A549 (cell line): ENCODE measurements at regions of chr1 and their contacts with region 1.

Region 1: DNA sequence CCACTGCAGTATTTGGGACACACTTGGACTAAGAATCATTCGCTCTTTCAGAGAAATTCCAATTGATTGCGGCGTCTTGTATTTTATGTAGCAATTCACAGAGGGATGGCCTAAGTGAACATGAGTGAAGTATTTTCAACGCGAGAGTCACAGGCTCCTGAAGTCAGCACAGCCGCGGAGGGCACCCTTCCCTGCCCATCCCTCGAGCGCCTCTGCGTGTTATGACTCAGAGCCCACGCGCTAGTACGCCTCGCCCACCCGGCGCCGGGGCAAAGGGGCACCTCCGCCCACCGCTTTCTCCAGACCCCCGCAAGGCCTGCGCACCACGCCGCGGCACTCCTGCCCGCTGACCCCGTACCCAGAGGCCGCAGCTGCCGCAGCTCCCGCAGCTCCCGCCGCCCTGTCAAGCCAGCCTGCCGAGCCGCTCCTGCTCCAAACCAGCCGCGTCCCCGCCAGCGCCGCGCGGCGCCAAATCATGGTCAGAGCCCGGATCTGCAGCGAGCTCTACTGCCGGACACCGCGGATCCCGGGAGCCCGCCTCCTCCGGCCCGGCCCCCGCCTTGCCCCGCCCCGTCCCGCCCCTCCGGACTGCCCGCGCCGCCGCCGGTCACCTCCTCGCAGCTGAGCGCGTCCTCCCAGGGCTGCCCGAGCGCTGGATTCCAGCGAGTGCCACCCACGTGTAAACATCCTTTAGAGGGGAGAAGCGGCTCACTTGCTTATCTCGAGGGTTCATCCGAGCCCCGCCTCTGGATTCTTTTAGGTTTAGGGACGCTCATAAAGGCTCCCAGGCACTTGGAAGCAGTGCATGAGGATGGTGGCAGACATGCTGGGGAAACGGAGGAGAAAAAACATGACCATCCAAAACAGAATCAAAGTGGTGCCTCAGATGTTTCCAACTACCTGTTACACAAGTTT is at the start of gene GLRX2:
- DNase-seq: peak; percentile 88 to 89
- ATAC-seq: peak; percentile 90 to 96
- H3K4me3 ChIP-seq: peak within 1 kb of the TSS; percentile 67
- H3K27ac ChIP-seq: peak within 1 kb of the TSS; percentile 76 to 96
- H3K4me1 ChIP-seq: peaks cover 17% of the 10 kb centered on the region; the same call in 2 of the 3 replicates
- CTCF ChIP-seq: no peak
- EP300 ChIP-seq: no peak
- POLR2A ChIP-seq: peak; percentile 78
- RAD21 ChIP-seq: peak; percentile 51 to 64
- polyA plus RNA-seq, gene GLRX2: 33.5 and 64.8 TPM in 2 replicates

Region 2: DNA sequence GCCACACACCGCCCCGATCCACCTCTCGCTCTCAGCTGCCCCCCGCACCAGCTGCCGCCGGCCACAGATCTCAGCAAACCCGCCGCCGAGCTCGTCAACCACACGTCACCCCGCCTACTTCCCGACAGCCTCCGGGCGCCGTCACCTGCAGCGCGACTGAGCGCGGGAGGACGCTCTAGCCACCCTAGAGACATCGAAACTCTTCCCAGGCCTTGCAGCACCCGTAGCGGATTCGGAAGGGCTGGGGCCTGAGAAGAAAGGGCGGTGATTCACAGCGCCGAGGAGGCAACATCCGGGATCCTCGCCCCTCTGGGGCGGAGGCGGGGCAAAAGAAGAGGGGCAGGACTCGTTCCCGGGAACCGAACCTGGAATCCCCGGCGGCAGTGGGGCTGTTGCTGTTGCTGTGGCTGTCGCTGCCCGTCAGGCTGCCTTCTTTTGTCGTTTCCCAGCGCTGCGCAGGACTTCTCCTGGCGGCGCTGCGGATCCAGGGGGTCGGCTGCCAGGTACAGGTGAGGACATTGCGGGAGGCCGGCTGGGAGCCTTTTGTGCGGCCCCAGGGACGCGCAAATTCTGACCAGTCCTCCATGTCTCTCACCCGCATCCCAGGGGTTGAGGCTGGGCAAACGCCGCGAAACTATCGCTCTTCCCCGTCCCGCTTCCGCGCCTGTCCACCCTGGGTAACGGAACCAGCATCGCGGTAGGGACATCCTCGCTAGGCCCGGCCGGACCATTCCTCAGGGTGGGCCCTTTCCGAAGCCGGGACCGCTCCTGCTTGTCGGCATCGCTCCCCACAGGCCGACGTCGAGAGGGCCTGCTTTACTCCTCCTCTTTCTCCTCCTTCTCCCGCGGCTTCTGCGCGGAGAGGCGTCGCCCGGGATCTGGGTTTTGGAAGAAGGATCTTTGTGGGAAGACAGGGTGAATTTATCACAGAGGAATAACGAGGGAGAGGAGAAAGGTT is 45.6 kb before region 1 on chr1 and contains the starts of genes RO60 and UCHL5:
- CTCF ChIA-PET with region 1: interaction called, 4 read pairs
- POLR2A ChIA-PET with region 1: interaction called, 17 read pairs
- DNase-seq: peak; percentile 91 to 99
- ATAC-seq: peak; percentile 95 to 97
- H3K4me3 ChIP-seq: peak within 1 kb of the TSS; percentile 82
- H3K27ac ChIP-seq: peak within 1 kb of the TSS; percentile 94 to 96
- H3K4me1 ChIP-seq: peaks cover 22% of the 10 kb centered on the region
- CTCF ChIP-seq: no peak
- EP300 ChIP-seq: no peak
- POLR2A ChIP-seq: peak; percentile 69
- RAD21 ChIP-seq: peak in 1 of 2 experiments; percentile 15; a peak in 1 of 5 replicates
- polyA plus RNA-seq, gene RO60: 37.4 and 47.1 TPM in 2 replicates
- polyA plus RNA-seq, gene UCHL5: 37.6 and 68.3 TPM in 2 replicates

Region 3: DNA sequence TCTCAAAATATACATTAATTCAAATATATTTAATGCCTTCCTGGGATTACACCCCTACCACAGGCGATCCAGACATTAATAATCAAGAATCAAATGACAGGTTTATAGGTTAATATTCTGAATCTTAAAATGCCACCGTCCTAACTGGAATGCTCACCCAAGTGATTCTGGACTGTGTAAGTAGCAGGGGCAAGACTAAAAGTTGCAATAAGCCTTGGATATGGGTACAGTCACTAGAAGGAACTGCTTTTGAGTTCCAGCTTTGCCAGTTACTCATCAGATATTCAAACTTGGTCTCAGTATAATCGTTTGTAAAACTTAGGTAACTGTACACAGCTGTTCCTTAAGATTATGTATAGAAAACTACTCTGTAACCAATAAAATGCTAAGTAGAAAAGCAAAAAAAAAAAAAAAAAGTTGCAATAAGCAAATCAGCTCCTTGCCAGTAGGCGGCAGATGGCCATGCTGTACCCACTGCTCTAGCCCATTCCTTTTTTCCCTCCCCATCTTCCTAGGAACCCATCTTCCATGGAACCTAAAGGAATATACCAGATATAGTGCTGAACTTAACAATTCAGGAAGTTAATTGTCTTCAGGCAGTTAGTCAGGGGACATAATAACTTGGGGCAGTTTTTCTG is 35.3 kb before region 1 on chr1:
- CTCF ChIA-PET with region 1: no interaction called
- POLR2A ChIA-PET with region 1: interaction called, 14 read pairs
- DNase-seq: peak; percentile 39 to 68
- ATAC-seq: peak; percentile 95
- H3K4me3 ChIP-seq: no peak overlapping the region
- H3K27ac ChIP-seq: no peak overlapping the region
- H3K4me1 ChIP-seq: no peaks in the 10 kb centered on the region
- CTCF ChIP-seq: peak; percentile 43
- EP300 ChIP-seq: no peak
- POLR2A ChIP-seq: no peak
- RAD21 ChIP-seq: peak; percentile 31 to 48; a peak in 3 of 5 replicates

Region 4: GRCh38 chr1:193179094-193179493 is 73.9 kb after region 1 on chr1:
- CTCF ChIA-PET with region 1: no interaction called
- POLR2A ChIA-PET with region 1: no interaction called
- DNase-seq: no peak
- ATAC-seq: no peak
- H3K4me3 ChIP-seq: no peak overlapping the region
- H3K27ac ChIP-seq: no peak overlapping the region
- H3K4me1 ChIP-seq: peaks cover 6% of the 10 kb centered on the region; the same call in 2 of the 3 replicates
- CTCF ChIP-seq: no peak
- EP300 ChIP-seq: no peak
- POLR2A ChIP-seq: no peak
- RAD21 ChIP-seq: no peak

Region 5: GRCh38 chr1:193283016-193283415 is 177.9 kb after region 1 on chr1:
- CTCF ChIA-PET with region 1: no interaction called
- POLR2A ChIA-PET with region 1: no interaction called
- DNase-seq: no peak
- ATAC-seq: peak; percentile 26 to 47; a peak in 2 of 6 replicates
- H3K4me3 ChIP-seq: no peak overlapping the region
- H3K27ac ChIP-seq: 0 out of 6 replicates have a peak overlapping the region, but pooled peaks of 1 of the 2 experiments have one; percentile 43
- H3K4me1 ChIP-seq: peaks cover 10% of the 10 kb centered on the region; the same call in 2 of the 3 replicates
- CTCF ChIP-seq: no peak
- EP300 ChIP-seq: no peak
- POLR2A ChIP-seq: no peak
- RAD21 ChIP-seq: no peak